H1 (cell line): ENCODE measurements at regions of chr14 and their contacts with region 1.

Region 1: DNA sequence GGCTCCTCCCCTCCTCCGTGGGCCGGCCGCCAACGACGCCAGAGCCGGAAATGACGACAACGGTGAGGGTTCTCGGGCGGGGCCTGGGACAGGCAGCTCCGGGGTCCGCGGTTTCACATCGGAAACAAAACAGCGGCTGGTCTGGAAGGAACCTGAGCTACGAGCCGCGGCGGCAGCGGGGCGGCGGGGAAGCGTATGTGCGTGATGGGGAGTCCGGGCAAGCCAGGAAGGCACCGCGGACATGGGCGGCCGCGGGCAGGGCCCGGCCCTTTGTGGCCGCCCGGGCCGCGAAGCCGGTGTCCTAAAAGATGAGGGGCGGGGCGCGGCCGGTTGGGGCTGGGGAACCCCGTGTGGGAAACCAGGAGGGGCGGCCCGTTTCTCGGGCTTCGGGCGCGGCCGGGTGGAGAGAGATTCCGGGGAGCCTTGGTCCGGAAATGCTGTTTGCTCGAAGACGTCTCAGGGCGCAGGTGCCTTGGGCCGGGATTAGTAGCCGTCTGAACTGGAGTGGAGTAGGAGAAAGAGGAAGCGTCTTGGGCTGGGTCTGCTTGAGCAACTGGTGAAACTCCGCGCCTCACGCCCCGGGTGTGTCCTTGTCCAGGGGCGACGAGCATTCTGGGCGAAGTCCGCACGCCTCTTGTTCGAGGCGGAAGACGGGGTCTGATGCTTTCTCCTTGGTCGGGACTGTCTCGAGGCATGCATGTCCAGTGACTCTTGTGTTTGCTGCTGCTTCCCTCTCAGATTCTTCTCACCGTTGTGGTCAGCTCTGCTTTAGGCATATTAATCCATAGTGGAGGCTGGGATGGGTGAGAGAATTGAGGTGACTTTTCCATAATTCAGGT is at the start of gene PSEN1:
- DNase-seq: peak; percentile 69 to 100
- H3K4me3 ChIP-seq: peak within 1 kb of the TSS; percentile 83 to 93 (median 90)
- H3K27ac ChIP-seq: peak within 1 kb of the TSS; percentile 76
- H3K4me1 ChIP-seq: peaks cover 0 to 7% (median 2%) of the 10 kb centered on the region in 4 experiments; a peak in 3 of 7 replicates
- H3K27me3 ChIP-seq: no peaks in the 10 kb centered on the region
- CTCF ChIP-seq: no peak
- EP300 ChIP-seq: 0 out of 3 replicates have a peak, but pooled peaks of 1 of the 2 experiments have one; percentile 35
- POLR2A ChIP-seq: peak; percentile 76 to 92
- RAD21 ChIP-seq: no peak
- total RNA-seq, gene PSEN1: 38.7 TPM in 2 replicates

Region 2: GRCh38 chr14:72792051-72792788 is 344.4 kb before region 1 on chr14:
- CTCF ChIA-PET with region 1: no interaction called
- POLR2A ChIA-PET with region 1: no interaction called
- DNase-seq: no peak
- H3K4me3 ChIP-seq: no peak overlapping the region
- H3K27ac ChIP-seq: no peak overlapping the region
- H3K4me1 ChIP-seq: peaks cover 1 to 17% (median 6%) of the 10 kb centered on the region in 4 experiments; a peak in 4 of 7 replicates
- H3K27me3 ChIP-seq: no peaks in the 10 kb centered on the region
- CTCF ChIP-seq: no peak
- EP300 ChIP-seq: no peak
- POLR2A ChIP-seq: no peak
- RAD21 ChIP-seq: no peak

Region 3: DNA sequence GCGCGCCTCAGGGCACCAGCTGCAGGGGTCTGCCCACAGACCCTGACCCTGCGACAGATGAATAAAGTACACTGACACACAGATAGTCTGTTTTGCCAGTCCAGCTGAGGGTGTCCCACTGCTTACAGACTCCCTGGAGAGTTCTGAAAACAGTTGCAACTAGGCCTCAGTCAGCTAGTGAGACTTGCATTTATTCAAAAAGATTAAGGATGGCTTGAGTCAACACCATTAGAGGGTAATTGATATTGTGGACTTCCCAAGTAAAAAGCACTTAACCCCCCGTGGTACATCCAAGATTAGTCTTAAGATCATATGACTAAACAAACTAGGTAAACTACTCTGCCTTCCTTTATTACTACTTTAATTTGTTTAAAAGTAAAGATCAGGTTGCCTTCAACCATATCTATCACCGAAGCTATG is 11.4 kb before region 1 on chr14:
- CTCF ChIA-PET with region 1: interaction called, 9 read pairs
- POLR2A ChIA-PET with region 1: interaction called, 57 read pairs
- DNase-seq: no peak
- H3K4me3 ChIP-seq: peak overlapping the region in 1 of 4 experiments; percentile 6; a peak in 1 of 8 replicates
- H3K27ac ChIP-seq: no peak overlapping the region
- H3K4me1 ChIP-seq: peaks cover 3 to 18% (median 10%) of the 10 kb centered on the region in 4 experiments
- H3K27me3 ChIP-seq: no peaks in the 10 kb centered on the region
- CTCF ChIP-seq: no peak
- EP300 ChIP-seq: no peak
- POLR2A ChIP-seq: peak in 1 of 2 experiments; percentile 7; a peak in 1 of 3 replicates
- RAD21 ChIP-seq: no peak

Region 4: DNA sequence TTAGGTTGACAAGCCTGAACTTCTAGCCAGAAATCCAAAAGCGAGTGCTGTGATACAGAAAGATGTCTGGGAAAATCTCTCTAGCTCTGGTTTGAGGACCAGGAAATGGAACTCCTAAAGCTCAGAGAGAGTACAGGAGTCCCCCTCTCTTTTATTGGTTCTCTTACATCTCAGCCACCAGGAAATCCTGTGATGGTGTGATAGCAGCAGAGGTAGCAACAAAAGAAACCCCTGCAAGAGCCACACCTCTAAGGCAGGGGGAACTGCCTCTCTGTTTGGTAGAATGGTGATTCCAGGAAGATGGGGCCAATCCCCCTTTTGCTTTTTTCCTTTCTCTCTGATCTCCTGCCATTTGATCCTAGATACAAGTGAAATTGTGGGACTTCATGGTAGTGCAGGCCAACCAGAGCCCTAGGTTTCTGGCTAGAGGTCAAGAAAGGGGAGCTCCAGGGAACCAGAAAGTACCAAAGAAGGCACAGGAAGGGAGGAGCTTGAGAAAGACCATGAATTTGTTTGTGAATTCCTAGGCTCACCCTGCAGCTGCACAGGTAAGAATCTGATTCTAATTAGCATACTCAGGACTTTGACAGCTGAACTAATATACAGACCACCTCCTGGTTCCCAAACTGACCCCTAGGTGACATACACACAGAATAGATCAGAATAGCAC is 189.2 kb after region 1 on chr14:
- CTCF ChIA-PET with region 1: no interaction called
- POLR2A ChIA-PET with region 1: no interaction called
- DNase-seq: no peak
- H3K4me3 ChIP-seq: no peak overlapping the region
- H3K27ac ChIP-seq: no peak overlapping the region
- H3K4me1 ChIP-seq: peaks cover 0 to 4% (median 3%) of the 10 kb centered on the region in 4 experiments; a peak in 2 of 7 replicates
- H3K27me3 ChIP-seq: no peaks in the 10 kb centered on the region
- CTCF ChIP-seq: no peak
- EP300 ChIP-seq: no peak
- POLR2A ChIP-seq: no peak
- RAD21 ChIP-seq: no peak